Activated naive CD4-positive, alpha-beta T cell treated with anti-CD3 and anti-CD28 coated beads for 36 hours (primary cell): ENCODE measurements at regions of chrX and their contacts with region 1.

Region 1: DNA sequence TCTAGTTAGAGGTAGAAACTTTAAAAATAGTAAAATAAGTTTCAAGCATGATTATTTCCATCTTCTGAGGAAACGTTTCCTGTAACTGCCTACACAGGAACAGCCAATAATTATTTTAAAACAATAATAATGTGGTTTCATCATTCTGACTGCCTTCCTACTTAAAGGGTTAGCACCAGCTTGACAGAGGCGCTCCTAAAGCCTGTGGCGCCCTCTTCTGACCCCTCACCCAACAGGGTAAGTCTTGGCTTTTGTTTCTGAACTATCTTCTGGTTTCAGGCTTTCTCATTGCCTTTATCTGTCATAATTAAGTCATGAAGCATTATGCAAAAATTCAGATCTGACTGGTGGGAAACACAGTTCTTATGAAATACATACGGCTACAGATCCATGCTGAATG is 96.7 kb downstream of the ITM2A start:
- DNase-seq: peak; percentile 88
- H3K4me3 Mint-ChIP-seq: peak overlapping the region; percentile 52
- H3K27ac Mint-ChIP-seq: peak overlapping the region; percentile 89
- H3K4me1 Mint-ChIP-seq: peaks cover 42% of the 10 kb centered on the region
- H3K27me3 Mint-ChIP-seq: no peaks in the 10 kb centered on the region

Region 2: GRCh38 chrX:78139160-78140123 is 1131.0 kb before region 1 on chrX and contains the start of gene TAF9B:
- CTCF ChIA-PET with region 1: no interaction called
- intact Hi-C with region 1: loop called (anchors 5 kb)
- DNase-seq: peak; percentile 89
- H3K4me3 Mint-ChIP-seq: peak within 1 kb of the TSS; percentile 89
- H3K27ac Mint-ChIP-seq: peak within 1 kb of the TSS; percentile 90
- H3K4me1 Mint-ChIP-seq: peaks cover 4% of the 10 kb centered on the region
- H3K27me3 Mint-ChIP-seq: no peaks in the 10 kb centered on the region
- total RNA-seq, gene TAF9B: 25.9 to 27.2 TPM

Region 3: GRCh38 chrX:78653118-78653822 is 617.1 kb before region 1 on chrX:
- CTCF ChIA-PET with region 1: no interaction called
- intact Hi-C with region 1: loop called (anchors 5 kb)
- DNase-seq: no peak
- H3K4me3 Mint-ChIP-seq: no peak overlapping the region
- H3K27ac Mint-ChIP-seq: no peak overlapping the region
- H3K4me1 Mint-ChIP-seq: peaks cover 15% of the 10 kb centered on the region
- H3K27me3 Mint-ChIP-seq: no peaks in the 10 kb centered on the region

Region 4: GRCh38 chrX:78754917-78755316 is 515.5 kb before region 1 on chrX:
- CTCF ChIA-PET with region 1: no interaction called
- intact Hi-C with region 1: no loop called
- DNase-seq: no peak
- H3K4me3 Mint-ChIP-seq: no peak overlapping the region
- H3K27ac Mint-ChIP-seq: no peak overlapping the region
- H3K4me1 Mint-ChIP-seq: no peaks in the 10 kb centered on the region
- H3K27me3 Mint-ChIP-seq: no peaks in the 10 kb centered on the region

Region 5: DNA sequence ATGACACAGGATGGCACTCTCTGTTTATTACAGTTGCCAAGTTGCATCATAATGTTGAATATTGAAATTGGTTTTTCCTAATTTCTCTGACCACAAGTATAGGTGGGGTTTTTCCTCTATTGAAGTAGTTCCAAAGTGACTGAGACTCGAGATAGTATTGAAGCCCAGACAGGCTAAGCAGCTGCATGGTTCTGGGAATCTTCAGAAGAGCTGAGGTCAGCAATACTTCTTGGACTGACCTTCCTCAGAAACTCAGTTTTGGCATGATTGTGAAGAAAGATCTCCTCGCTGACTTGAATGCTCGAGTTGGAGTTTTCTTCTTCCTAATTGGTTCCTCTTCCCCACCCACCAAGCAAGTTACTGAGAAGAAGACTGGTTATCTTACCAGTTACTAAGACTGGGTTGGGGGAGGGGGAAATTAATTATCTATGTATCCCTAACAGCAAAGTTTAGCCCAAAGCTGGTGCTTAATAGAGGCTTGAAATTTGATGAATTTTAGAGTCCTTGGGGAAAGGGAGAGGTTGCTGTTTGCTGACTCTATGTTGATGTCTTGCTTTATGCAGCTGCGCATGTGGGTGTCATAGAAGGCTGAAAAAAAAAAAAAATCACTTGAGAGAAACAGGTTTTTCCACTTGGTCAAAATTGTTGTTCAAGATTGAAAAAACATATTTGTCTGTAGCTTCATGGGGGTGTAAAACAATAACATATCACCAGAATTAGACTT is 234.1 kb before region 1 on chrX:
- CTCF ChIA-PET with region 1: no interaction called
- intact Hi-C with region 1: loop called (anchors 1 kb)
- DNase-seq: no peak
- H3K4me3 Mint-ChIP-seq: peak overlapping the region; percentile 36
- H3K27ac Mint-ChIP-seq: no peak overlapping the region
- H3K4me1 Mint-ChIP-seq: peaks cover 42% of the 10 kb centered on the region
- H3K27me3 Mint-ChIP-seq: no peaks in the 10 kb centered on the region

Region 6: DNA sequence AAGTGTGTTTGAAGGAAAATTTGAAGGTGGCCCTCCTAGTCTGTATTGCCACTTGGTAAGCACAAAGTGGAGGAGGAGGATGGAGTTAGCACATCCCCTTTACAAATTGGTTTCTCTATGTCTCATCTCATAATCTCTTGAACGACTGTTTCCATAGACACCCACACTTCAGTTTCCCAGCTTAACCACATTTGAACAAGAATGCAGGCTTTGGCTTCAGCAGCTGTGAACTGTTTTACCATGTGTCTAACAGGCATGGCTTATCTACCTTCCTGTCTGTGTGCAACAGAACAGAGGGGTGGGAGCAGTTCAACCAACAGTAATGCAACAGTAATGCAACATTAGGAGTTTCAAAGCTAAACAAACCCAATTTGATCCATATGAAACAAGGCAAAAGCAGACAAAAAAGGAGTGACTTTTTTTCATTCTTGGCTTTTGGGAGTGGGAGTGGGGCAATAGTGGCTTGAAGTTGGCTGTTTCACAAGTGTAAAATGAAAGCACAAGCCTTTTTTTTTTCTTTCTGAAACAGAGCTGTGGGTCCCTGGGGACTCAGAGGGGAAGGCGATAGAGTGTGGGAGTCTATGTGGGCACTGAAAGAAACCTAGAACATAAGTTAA is 11.2 kb before region 1 on chrX:
- CTCF ChIA-PET with region 1: interaction called, 5 read pairs
- intact Hi-C with region 1: loop called (anchors 1 kb)
- DNase-seq: peak; percentile 68
- H3K4me3 Mint-ChIP-seq: peak overlapping the region; percentile 58
- H3K27ac Mint-ChIP-seq: peak overlapping the region; percentile 91
- H3K4me1 Mint-ChIP-seq: peaks cover 83% of the 10 kb centered on the region
- H3K27me3 Mint-ChIP-seq: no peaks in the 10 kb centered on the region

Region 7: GRCh38 chrX:79412972-79413371 is 142.6 kb after region 1 on chrX:
- CTCF ChIA-PET with region 1: interaction called, 9 read pairs
- intact Hi-C with region 1: loop called (anchors 1 kb)
- DNase-seq: no peak
- H3K4me3 Mint-ChIP-seq: peak overlapping the region; percentile 66
- H3K27ac Mint-ChIP-seq: peak overlapping the region; percentile 69
- H3K4me1 Mint-ChIP-seq: peaks cover 21% of the 10 kb centered on the region
- H3K27me3 Mint-ChIP-seq: no peaks in the 10 kb centered on the region